Right ventricle myocardium inferior (tissue), 1 donor: ENCODE measurements at regions of chr11 and their contacts with region 1.

Region 1: GRCh38 chr11:18395735-18396504 is 1.6 kb downstream of the LDHA start:
- DNase-seq: peak; percentile 100
- ATAC-seq: peak; percentile 96

Region 2: DNA sequence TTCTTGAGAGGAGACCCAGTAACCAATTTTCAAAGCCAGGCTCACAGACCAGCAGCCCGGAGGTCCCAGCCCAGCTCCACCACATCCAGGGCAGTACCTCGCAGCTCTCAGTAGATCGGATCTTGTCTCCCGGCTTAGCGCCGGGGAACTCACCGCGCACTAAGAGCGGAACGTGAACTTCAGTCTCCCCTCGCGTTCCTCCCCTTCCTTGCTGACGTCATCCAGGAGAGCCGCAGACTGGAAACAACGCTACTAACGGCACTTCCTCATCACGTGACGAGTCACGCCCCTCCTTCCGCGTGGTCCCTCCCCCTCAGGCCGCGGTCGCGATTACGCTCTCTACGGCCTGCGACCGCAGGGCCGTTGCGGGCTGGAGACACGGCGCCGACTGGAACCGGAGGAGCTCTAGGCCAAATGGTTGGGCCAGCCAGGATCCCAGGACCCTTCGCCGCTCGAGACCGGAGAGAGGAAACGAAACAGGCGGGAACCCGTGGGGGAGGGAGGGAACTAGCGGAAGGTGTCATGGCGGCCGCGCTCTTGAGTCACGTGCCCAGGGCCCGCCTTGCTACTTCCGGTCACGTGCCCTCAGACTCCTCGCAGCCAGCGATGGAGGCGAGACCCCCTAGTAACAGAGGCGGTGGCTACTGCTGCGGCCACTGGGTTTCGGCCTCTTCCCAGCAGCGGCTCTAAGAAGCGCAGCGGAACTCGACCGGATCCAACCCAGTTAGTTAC is 73.8 kb before region 1 on chr11 and contains the starts of genes GTF2H1 and HPS5:
- intact Hi-C with region 1: loop called (anchors 1 kb)
- DNase-seq: peak; percentile 96
- ATAC-seq: peak; percentile 99
- total RNA-seq, gene GTF2H1: 23.9 TPM
- total RNA-seq, gene HPS5: 10.5 TPM

Region 3: GRCh38 chr11:18383388-18384156 is 12.3 kb before region 1 on chr11:
- intact Hi-C with region 1: loop called (anchors 1 kb)
- DNase-seq: peak; percentile 86
- ATAC-seq: peak; percentile 95

Region 4: GRCh38 chr11:18526521-18527296 is 130.8 kb after region 1 on chr11 and contains the start of gene TSG101:
- intact Hi-C with region 1: loop called (anchors 2 kb)
- DNase-seq: peak; percentile 97
- ATAC-seq: peak; percentile 99
- total RNA-seq, gene TSG101: 62.6 TPM

Region 5: DNA sequence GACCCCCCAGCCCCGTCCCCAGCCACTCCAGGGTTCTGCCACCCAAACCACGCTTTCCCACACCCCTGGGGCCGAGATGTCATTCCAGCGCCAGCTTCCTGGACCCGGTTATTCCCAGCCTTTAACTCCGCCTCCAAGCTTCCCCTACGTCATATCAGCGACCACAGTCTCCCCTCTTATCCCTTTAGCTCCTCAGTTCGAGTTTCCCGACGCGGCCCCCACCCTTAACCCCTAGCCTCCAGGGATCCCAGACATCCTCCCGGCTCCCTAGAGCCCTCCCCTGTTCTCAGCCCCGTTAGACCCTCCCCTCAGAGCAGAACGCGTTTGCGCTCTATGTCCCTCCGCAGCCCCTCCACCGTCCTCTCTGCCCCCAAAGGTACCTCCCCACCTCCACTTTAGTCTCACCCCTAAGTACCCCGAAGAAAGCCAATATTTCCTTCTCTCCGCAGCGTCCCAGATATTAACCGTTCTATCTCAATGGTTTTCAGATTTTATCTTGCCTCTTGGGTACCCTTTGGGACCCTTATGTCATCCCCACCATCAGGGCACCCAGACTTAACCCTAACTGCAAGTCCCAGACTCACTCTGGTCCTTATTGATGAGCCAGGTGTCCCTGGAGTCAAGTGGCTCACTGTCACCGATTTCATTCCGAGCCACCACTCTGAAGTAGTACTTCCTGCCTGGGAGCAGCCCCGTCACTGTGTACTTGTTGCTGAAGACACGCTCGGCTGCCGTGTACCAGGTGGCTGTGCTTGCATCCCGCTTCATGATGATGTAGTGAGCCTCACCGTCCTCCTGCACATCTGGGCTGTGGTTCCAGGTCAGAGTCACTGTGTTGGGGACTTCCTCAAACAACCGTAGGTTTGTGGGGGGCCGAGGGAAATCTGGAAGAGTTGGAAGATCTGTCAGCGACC is 310.7 kb after region 1 on chr11:
- intact Hi-C with region 1: loop called (anchors 10 kb)
- DNase-seq: peak; percentile 74
- ATAC-seq: peak; percentile 51